Activated T-helper 2 cell treated with anti-CD3 and anti-CD28 coated beads, Interferon-gamma antibody, Interleukin-2, Interleukin-4, amounts not matched to agents 10 μg/mL and 5 μg/mL and 100 μg/mL, durations not matched to agents 14 hours and 24 hours and 36 hours (primary cell): ENCODE measurements at regions of chr11 and their contacts with region 1.

Region 1: GRCh38 chr11:62694455-62695167 is 5.3 kb upstream of the LRRN4CL start:
- DNase-seq: peak; percentile 64
- H3K4me3 Mint-ChIP-seq: no peak overlapping the region
- H3K27ac Mint-ChIP-seq: peak overlapping the region; percentile 60
- H3K4me1 Mint-ChIP-seq: peaks cover 8% of the 10 kb centered on the region
- H3K27me3 Mint-ChIP-seq: no peaks in the 10 kb centered on the region

Region 2: DNA sequence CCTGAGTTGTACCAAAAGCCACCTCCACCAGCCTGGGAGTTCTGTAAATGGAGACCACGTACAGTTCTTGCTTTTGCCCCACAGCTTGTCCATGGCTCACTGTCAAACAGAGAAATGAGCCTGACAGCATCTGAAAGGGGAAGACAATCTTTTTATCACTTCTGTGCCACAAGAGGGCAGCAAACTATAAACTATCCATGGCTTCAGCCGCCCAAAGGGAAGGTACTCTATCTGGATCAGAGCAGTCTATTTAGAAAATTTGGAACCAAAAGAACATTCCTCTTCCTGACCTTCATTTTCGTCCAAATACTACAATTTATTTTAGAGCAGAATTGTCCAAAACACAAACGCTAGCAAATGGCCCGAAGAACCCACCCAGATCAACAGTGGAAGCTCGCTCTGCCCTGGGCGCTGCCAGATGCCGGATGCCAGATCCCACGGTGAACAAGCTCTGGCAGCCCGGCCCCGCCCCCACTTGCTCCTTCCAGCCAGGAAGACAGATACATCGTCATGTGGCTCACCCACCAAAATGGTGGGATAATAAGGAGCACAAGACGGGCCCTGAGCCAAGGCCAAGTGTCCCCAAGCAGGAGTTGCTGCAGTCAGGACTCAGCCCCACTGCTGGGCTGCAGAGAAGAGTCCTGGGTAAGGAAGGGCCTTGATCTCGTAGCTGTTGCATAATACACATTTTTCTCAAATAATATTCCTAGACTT is 299.6 kb before region 1 on chr11:
- intact Hi-C with region 1: loop called (anchors 10 kb)
- DNase-seq: peak; percentile 40
- H3K4me3 Mint-ChIP-seq: no peak overlapping the region
- H3K27ac Mint-ChIP-seq: no peak overlapping the region
- H3K4me1 Mint-ChIP-seq: peaks cover 10% of the 10 kb centered on the region
- H3K27me3 Mint-ChIP-seq: peaks cover under 1% of the 10 kb centered on the region

Region 3: DNA sequence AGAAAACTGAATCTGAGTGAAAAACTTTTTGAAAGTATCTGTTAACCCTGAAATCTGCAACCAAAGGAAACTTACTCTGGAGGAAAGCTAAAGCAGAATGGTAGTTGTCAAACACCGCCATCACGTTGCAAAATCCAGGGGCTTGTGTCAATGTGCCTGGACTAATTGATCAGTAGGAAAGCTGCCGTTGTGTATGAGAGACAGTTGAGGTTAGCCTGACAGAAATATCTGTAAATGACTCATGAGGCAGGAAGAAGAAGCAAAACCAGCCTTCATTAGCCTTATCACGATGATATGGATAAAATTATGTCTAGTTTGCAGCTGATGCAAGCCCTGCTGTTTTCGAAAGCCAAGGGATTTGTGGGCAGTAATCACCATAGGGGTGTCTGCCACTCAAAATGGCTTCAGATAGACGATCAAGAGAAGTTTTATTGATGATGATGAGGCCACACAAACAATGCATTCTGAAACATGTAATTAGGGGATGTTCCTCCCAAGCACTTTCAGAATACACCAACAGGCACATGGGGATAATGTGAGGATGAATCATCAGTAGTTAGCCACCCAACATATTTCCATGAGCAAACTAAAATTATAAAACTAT is 266.9 kb before region 1 on chr11:
- intact Hi-C with region 1: loop called (anchors 10 kb)
- DNase-seq: peak; percentile 26
- H3K4me3 Mint-ChIP-seq: peak overlapping the region; percentile 43
- H3K27ac Mint-ChIP-seq: peak overlapping the region; percentile 89
- H3K4me1 Mint-ChIP-seq: peaks cover 53% of the 10 kb centered on the region
- H3K27me3 Mint-ChIP-seq: no peaks in the 10 kb centered on the region

Region 4: DNA sequence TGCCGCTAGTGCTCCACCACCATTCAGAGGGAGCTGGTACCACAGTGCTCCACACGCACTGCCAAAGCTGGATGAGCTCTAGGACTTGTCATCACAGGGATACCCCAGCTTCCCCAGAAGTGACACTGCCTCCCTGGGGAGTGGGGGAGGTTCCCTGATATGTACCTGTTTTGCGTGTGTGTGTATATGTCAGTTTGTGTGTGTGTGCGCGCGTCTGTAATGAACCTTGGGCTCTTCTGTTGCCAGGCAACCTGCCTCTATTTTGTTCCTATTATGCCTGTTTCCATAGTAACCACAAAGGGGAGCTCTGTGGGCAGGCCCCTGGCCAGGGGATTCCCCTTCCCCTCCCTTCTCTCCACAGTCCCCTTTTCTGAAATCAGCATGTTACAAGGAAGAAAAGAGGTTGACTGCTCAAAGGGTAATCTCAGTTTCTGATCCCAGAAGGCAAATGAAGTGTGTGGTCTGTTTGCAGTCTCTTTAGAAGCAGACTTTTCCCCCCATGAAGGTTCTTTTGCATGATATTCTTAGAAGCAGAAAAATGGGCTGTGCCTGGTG is 142.8 kb before region 1 on chr11:
- intact Hi-C with region 1: no loop called
- DNase-seq: peak; percentile 90
- H3K4me3 Mint-ChIP-seq: peak overlapping the region; percentile 6
- H3K27ac Mint-ChIP-seq: peak overlapping the region; percentile 97
- H3K4me1 Mint-ChIP-seq: peaks cover 73% of the 10 kb centered on the region
- H3K27me3 Mint-ChIP-seq: peaks cover 12% of the 10 kb centered on the region

Region 5: GRCh38 chr11:62665075-62665598 is 29.5 kb before region 1 on chr11 and contains the starts of genes C11orf98 and CSKMT:
- intact Hi-C with region 1: no loop called
- DNase-seq: peak; percentile 95
- H3K4me3 Mint-ChIP-seq: peak within 1 kb of the TSS; percentile 97
- H3K27ac Mint-ChIP-seq: peak within 1 kb of the TSS; percentile 78
- H3K4me1 Mint-ChIP-seq: peaks cover 29% of the 10 kb centered on the region
- H3K27me3 Mint-ChIP-seq: no peaks in the 10 kb centered on the region
- total RNA-seq, gene C11orf98: 118 and 130 TPM in 2 replicates
- total RNA-seq, gene CSKMT: 45.4 and 47.2 TPM in 2 replicates